Activated B cell treated with CpG ODN at 0.5 μM for 24 hours (primary cell): ENCODE measurements at regions of chr9 and their contacts with region 1.

Region 1: DNA sequence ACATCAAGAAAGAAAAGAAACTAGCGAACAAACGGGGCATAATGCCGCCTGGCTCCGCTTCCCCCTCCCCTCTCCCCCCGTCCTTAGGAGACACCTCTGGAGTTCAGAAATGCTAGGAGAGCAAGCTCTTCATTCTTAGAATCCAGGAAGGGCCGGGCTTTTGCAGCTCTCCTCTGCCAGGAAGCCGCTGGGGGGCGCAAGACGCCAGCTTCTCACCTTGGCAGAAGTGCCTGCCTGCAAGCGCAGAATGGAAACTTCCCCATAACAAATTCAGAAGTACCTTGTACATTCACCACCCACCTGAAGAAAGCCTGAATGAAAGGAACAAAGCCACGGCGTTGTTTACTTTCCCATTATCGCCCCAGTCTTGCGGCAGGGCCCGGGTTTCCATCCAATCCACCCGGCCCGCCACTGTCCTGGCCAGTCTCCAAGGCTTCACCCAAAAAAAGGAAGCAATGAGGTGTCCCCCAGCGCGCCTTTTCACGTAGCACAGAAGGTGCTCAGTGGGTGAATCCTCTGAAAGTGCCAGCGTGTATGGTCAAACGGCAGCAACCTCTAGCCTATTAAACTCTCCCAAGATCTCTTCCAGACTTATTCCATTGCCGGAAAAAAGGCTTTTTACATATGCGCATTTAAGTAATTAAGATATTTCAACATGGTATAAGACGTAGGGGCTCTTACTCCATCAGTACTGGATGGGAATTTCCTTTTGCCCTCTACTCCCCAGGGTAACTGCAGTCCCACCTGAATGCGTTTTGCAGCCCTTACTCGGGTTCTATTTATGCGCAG is 1.6 kb upstream of the GADD45G start:
- DNase-seq: peak; percentile 80
- ATAC-seq: peak; percentile 45
- H3K4me3 Mint-ChIP-seq: peak overlapping the region; percentile 84
- H3K27ac Mint-ChIP-seq: peak overlapping the region; percentile 80
- H3K4me1 Mint-ChIP-seq: peaks cover 32% of the 10 kb centered on the region
- H3K27me3 Mint-ChIP-seq: peaks cover 6% of the 10 kb centered on the region
- CTCF ChIP-seq: no peak

Region 2: GRCh38 chr9:89489548-89490530 is 113.3 kb before region 1 on chr9:
- CTCF ChIA-PET with region 1: no interaction called
- POLR2A ChIA-PET with region 1: no interaction called
- intact Hi-C with region 1: no loop called
- DNase-seq: no peak
- ATAC-seq: peak; percentile 68
- H3K4me3 Mint-ChIP-seq: peak overlapping the region; percentile 46
- H3K27ac Mint-ChIP-seq: peak overlapping the region; percentile 80
- H3K4me1 Mint-ChIP-seq: peaks cover 92% of the 10 kb centered on the region
- H3K27me3 Mint-ChIP-seq: no peaks in the 10 kb centered on the region
- CTCF ChIP-seq: no peak

Region 3: DNA sequence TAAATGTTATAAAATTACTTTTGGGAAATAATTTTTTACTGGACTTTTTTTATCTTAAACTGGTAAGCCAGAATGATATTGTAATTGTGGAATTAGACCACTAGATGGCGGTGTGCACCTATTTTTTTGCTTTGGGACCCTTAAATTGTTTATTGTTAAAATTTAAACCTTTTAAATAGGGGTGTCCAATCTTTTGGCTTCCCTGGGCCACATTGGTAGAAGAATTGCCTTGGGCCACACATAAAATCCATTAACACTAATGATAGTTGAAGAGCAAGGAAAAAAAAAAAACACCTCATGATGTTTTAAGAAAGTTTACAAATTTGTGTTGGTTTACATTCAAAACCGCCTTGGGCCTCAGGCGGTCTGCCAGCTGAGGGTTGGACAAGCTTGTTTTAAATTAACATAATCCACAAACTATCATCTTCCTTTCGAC is 26.8 kb before region 1 on chr9:
- CTCF ChIA-PET with region 1: interaction called, 19 read pairs
- POLR2A ChIA-PET with region 1: no interaction called
- intact Hi-C with region 1: loop called (anchors 1 kb)
- DNase-seq: no peak
- ATAC-seq: no peak
- H3K4me3 Mint-ChIP-seq: no peak overlapping the region
- H3K27ac Mint-ChIP-seq: no peak overlapping the region
- H3K4me1 Mint-ChIP-seq: no peaks in the 10 kb centered on the region
- H3K27me3 Mint-ChIP-seq: peaks cover 32% of the 10 kb centered on the region
- CTCF ChIP-seq: peak; percentile 54

Region 4: DNA sequence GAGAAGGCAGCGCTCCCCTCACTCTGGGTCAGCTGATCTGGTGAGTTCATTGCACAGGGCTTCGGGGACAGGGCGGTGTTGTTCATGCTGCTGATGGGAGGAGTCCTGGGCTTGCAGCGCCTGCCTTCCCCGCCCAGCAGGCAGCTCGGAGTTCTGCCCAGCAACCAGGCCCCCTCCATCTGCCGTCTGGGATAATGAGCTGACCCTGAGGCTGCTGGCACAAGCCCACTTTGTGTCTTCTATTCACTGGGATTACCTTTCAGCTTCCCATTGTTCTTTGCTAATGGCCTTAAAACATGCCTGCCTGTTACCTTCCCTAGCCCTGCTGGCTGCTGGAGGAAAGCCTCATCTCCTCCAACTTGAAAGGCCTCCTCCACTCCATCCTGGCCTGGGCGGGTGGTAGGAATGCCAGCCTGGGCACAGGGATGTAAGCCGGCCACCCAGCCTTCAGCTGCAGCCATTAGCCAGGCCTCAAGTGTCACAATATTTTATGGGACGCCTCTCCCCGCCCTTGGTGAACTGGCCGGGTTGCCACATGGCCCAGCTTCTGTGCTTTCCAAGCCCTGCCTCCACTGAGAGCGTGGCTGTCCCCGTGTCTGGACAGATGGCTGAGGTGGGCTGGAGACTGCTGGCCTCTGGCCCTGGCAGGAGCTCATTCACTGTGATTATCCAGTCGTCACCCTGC is 72.0 kb after region 1 on chr9:
- CTCF ChIA-PET with region 1: no interaction called
- POLR2A ChIA-PET with region 1: no interaction called
- intact Hi-C with region 1: no loop called
- DNase-seq: no peak
- ATAC-seq: no peak
- H3K4me3 Mint-ChIP-seq: no peak overlapping the region
- H3K27ac Mint-ChIP-seq: no peak overlapping the region
- H3K4me1 Mint-ChIP-seq: no peaks in the 10 kb centered on the region
- H3K27me3 Mint-ChIP-seq: no peaks in the 10 kb centered on the region
- CTCF ChIP-seq: no peak

Region 5: GRCh38 chr9:89743573-89744361 is 140.6 kb after region 1 on chr9:
- CTCF ChIA-PET with region 1: interaction called, 7 read pairs
- POLR2A ChIA-PET with region 1: no interaction called
- intact Hi-C with region 1: loop called (anchors 1 kb)
- DNase-seq: no peak
- ATAC-seq: peak; percentile 15
- H3K4me3 Mint-ChIP-seq: no peak overlapping the region
- H3K27ac Mint-ChIP-seq: peak overlapping the region; percentile 65
- H3K4me1 Mint-ChIP-seq: peaks cover 60% of the 10 kb centered on the region
- H3K27me3 Mint-ChIP-seq: no peaks in the 10 kb centered on the region
- CTCF ChIP-seq: no peak

Region 6: GRCh38 chr9:89919169-89919681 is 316.1 kb after region 1 on chr9:
- CTCF ChIA-PET with region 1: interaction called, 30 read pairs
- POLR2A ChIA-PET with region 1: interaction called, 11 read pairs
- intact Hi-C with region 1: loop called (anchors 1 kb)
- DNase-seq: no peak
- ATAC-seq: peak; percentile 82
- H3K4me3 Mint-ChIP-seq: no peak overlapping the region
- H3K27ac Mint-ChIP-seq: no peak overlapping the region
- H3K4me1 Mint-ChIP-seq: peaks cover 8% of the 10 kb centered on the region
- H3K27me3 Mint-ChIP-seq: peaks cover 3% of the 10 kb centered on the region
- CTCF ChIP-seq: no peak

Region 7: DNA sequence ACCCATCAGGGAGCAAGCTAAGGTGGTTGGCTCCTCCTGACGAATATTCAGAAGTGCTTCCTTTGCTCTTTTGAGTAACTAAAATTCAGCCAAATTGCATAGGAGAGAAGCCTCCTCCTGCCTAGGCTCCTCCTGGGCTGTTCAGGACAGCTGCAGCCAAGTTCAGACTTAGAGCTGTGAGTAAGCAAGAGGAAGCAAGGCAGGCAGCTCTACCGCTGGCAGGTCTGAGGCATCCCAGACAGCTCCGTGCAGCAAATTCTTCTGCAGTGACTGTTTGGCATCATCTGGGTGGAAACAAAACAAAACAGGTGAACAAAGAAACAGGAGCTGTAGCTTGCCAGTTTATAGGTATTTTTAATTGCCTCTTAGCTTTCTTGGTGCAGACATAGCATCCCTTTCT is 422.6 kb after region 1 on chr9:
- CTCF ChIA-PET with region 1: interaction called, 3 read pairs
- POLR2A ChIA-PET with region 1: no interaction called
- intact Hi-C with region 1: loop called (anchors 1 kb)
- DNase-seq: no peak
- ATAC-seq: no peak
- H3K4me3 Mint-ChIP-seq: no peak overlapping the region
- H3K27ac Mint-ChIP-seq: no peak overlapping the region
- H3K4me1 Mint-ChIP-seq: peaks cover 60% of the 10 kb centered on the region
- H3K27me3 Mint-ChIP-seq: no peaks in the 10 kb centered on the region
- CTCF ChIP-seq: no peak

Region 8: DNA sequence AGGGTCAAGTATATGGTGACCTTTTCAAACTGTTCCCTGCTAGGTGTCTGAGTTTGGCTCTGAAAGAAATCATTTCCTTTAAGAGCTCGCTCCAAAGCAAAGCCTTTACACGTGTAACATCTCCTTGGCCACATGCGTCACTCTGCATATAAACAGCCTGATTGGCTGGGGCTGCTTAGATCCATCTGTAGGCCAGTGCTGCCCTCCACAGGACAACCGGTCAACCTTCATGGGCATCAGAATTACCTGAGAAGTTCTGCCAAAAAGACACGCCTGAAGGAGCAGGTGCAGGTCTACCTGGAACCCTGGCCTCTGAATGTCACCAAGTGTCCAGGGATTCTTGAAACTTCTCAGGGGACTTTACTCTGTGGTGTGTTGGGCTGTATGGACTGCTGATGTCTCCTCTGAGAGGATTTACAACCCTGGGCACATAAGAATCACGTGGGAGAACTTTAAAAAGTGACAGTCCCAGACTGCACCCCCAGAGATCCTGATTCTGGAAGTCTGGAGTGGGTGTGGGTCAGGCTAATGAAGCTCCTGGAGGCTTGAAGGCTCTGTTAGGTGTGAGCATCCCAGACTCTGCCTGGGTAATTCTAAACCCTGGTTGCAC is 499.2 kb after region 1 on chr9:
- CTCF ChIA-PET with region 1: interaction called, 166 read pairs
- POLR2A ChIA-PET with region 1: interaction called, 7 read pairs
- intact Hi-C with region 1: loop called (anchors 1 kb)
- DNase-seq: peak; percentile 56
- ATAC-seq: peak; percentile 100
- H3K4me3 Mint-ChIP-seq: no peak overlapping the region
- H3K27ac Mint-ChIP-seq: no peak overlapping the region
- H3K4me1 Mint-ChIP-seq: peaks cover 6% of the 10 kb centered on the region
- H3K27me3 Mint-ChIP-seq: no peaks in the 10 kb centered on the region
- CTCF ChIP-seq: peak; percentile 73

Region 9: GRCh38 chr9:90860826-90861225 is 1257.7 kb after region 1 on chr9:
- CTCF ChIA-PET with region 1: no interaction called
- POLR2A ChIA-PET with region 1: no interaction called
- intact Hi-C with region 1: loop called (anchors 10 kb)
- DNase-seq: no peak
- ATAC-seq: peak; percentile 89
- H3K4me3 Mint-ChIP-seq: peak overlapping the region; percentile 6
- H3K27ac Mint-ChIP-seq: peak overlapping the region; percentile 82
- H3K4me1 Mint-ChIP-seq: peaks cover 59% of the 10 kb centered on the region
- H3K27me3 Mint-ChIP-seq: no peaks in the 10 kb centered on the region
- CTCF ChIP-seq: no peak